Heart right ventricle (tissue), 16 donors: ENCODE measurements at regions of chr11 and their contacts with region 1.

Region 1: GRCh38 chr11:60831143-60831500 is 10.8 kb upstream of the CCDC86 start:
- DNase-seq: peak; percentile 81 to 86
- ATAC-seq: peak; percentile 83 to 94 (median 89)
- H3K4me3 ChIP-seq: no peak overlapping the region
- H3K27ac ChIP-seq: no peak overlapping the region
- H3K4me1 ChIP-seq: peaks cover 0 to 30% (median 0%) of the 10 kb centered on the region in 9 donors
- H3K27me3 ChIP-seq: no peaks in the 10 kb centered on the region
- CTCF ChIP-seq: peak; percentile 92 to 98 (median 94)

Region 2: GRCh38 chr11:60887556-60887955 is 56.4 kb after region 1 on chr11:
- intact Hi-C with region 1: loop called in 7 of 10 experiments (anchors 1 to 5 kb)
- DNase-seq: peak in 1 of 2 donors; percentile 43
- ATAC-seq: peak; percentile 65 to 86 (median 80)
- H3K4me3 ChIP-seq: no peak overlapping the region
- H3K27ac ChIP-seq: no peak overlapping the region
- H3K4me1 ChIP-seq: peaks cover 3 to 22% (median 15%) of the 10 kb centered on the region in 9 donors
- H3K27me3 ChIP-seq: no peaks in the 10 kb centered on the region
- CTCF ChIP-seq: peak in 8 of 9 donors; percentile 41 to 66 (median 62)

Region 3: GRCh38 chr11:60899046-60899936 is 68.2 kb after region 1 on chr11:
- intact Hi-C with region 1: loop called in 7 of 10 experiments (anchors 1 to 5 kb)
- DNase-seq: no peak
- ATAC-seq: peak in 7 of 8 donors; percentile 54 to 74 (median 69)
- H3K4me3 ChIP-seq: no peak overlapping the region
- H3K27ac ChIP-seq: peak overlapping the region in 1 of 10 donors; percentile 9
- H3K4me1 ChIP-seq: peaks cover 0 to 17% (median 6%) of the 10 kb centered on the region in 9 donors
- H3K27me3 ChIP-seq: no peaks in the 10 kb centered on the region
- CTCF ChIP-seq: peak; percentile 93 to 99 (median 95)

Region 4: GRCh38 chr11:61173456-61173855 is 342.3 kb after region 1 on chr11:
- intact Hi-C with region 1: loop called in 1 of 10 experiments (anchors 10 kb)
- DNase-seq: no peak
- ATAC-seq: no peak
- H3K4me3 ChIP-seq: no peak overlapping the region
- H3K27ac ChIP-seq: no peak overlapping the region
- H3K4me1 ChIP-seq: peaks cover 0 to 21% (median 0%) of the 10 kb centered on the region in 9 donors
- H3K27me3 ChIP-seq: peaks cover 0 to 35% (median 7%) of the 10 kb centered on the region in 7 donors
- CTCF ChIP-seq: peak in 4 of 9 donors; percentile 3 to 14 (median 11)

Region 5: DNA sequence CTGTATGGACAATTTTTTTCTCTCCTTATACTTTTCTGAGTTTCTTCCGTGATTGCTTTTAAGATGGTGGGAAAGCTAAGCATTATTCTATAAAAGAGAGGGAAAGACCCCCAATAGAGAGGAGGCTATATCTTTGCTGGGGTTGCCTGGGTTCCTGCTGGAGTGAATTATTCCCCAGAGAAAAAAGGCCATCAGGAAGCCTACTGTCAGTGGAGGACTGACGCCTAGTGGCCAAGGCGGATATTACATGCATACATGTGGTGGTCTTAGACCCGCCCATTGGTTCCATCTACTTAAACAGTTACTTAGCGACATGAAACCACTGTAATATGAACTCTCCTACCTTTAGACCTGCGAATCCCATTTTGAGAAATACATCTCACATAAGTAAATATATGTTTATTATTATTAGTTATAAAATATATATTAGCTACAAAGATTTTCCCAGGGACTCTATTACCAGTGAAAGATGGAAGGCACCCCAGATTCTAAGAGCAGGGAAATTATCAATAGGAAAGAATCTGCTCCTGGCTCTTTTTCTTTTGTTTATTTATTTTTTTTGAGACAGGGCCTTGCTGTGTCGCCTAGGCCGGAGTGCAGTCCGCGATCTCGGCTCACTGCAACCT is 356.5 kb after region 1 on chr11:
- intact Hi-C with region 1: loop called in 8 of 10 experiments (anchors 2 to 10 kb)
- DNase-seq: peak; percentile 56 to 76
- ATAC-seq: peak in 7 of 8 donors; percentile 46 to 81 (median 71)
- H3K4me3 ChIP-seq: no peak overlapping the region
- H3K27ac ChIP-seq: no peak overlapping the region
- H3K4me1 ChIP-seq: peaks cover 0 to 4% (median 0%) of the 10 kb centered on the region in 9 donors
- H3K27me3 ChIP-seq: peaks cover 0 to 45% (median 5%) of the 10 kb centered on the region in 7 donors
- CTCF ChIP-seq: peak; percentile 80 to 96 (median 93)